H1 (cell line): ENCODE measurements at regions of chr10 and their contacts with region 1.

Region 1: GRCh38 chr10:71494980-71495381 is 98.3 kb downstream of the CDH23 start:
- DNase-seq: no peak
- H3K4me3 ChIP-seq: no peak overlapping the region
- H3K27ac ChIP-seq: no peak overlapping the region
- H3K4me1 ChIP-seq: peaks cover 0 to 4% (median 1%) of the 10 kb centered on the region in 4 experiments; a peak in 1 of 7 replicates
- H3K27me3 ChIP-seq: peaks cover 0 to 33% (median 23%) of the 10 kb centered on the region in 4 experiments; a peak in 6 of 7 replicates
- CTCF ChIP-seq: no peak
- EP300 ChIP-seq: no peak
- POLR2A ChIP-seq: no peak
- RAD21 ChIP-seq: no peak

Region 2: GRCh38 chr10:71522442-71523144 is 27.6 kb after region 1 on chr10:
- CTCF ChIA-PET with region 1: interaction called, 11 read pairs
- POLR2A ChIA-PET with region 1: no interaction called
- DNase-seq: no peak
- H3K4me3 ChIP-seq: no peak overlapping the region
- H3K27ac ChIP-seq: no peak overlapping the region
- H3K4me1 ChIP-seq: peaks cover 0 to 3% (median 0%) of the 10 kb centered on the region in 4 experiments; a peak in 3 of 7 replicates
- H3K27me3 ChIP-seq: no peaks in the 10 kb centered on the region; a peak in 2 of 7 replicates
- CTCF ChIP-seq: peak; percentile 24 to 41 (median 37); a peak in 3 of 4 replicates
- EP300 ChIP-seq: no peak
- POLR2A ChIP-seq: no peak
- RAD21 ChIP-seq: peak; percentile 24 to 39; a peak in 3 of 4 replicates

Region 3: DNA sequence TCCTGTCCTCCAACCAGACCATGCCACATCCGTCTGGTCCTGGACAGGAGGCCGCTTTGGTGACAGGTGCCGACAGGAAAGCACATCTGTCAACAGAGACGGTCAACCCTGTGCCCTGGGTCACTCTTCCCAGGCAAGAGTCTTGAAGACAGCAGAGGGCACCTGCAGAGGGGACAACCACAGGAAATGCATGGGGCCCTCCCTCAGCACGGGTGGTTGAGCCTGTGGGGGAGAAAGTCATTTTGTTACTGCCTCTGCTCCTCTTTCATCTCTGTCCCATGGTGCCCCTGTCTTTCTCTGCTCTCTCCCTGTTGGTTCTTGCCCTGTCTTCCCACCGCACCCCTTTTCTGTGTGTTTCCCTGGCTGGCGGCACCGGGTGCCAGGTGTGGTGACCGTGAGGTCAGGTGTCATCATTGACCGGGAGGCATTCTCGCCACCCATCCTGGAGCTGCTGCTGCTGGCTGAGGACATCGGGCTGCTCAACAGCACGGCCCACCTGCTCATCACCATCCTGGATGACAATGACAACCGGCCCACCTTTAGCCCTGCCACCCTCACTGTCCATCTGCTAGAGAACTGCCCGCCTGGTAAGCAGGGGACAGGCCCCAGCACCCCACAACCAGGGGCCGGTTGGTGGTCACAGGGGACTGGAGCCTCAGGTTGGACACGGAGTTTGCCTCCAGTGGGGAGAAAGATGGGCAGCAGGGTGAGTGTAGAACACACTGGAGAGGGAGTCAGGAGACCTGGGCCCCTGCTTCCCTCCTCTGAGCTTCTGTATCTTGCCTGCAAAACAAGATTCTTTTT is 296.0 kb after region 1 on chr10:
- CTCF ChIA-PET with region 1: no interaction called
- POLR2A ChIA-PET with region 1: no interaction called
- DNase-seq: no peak
- H3K4me3 ChIP-seq: no peak overlapping the region
- H3K27ac ChIP-seq: no peak overlapping the region
- H3K4me1 ChIP-seq: no peaks in the 10 kb centered on the region
- H3K27me3 ChIP-seq: no peaks in the 10 kb centered on the region
- CTCF ChIP-seq: no peak
- EP300 ChIP-seq: no peak
- POLR2A ChIP-seq: no peak
- RAD21 ChIP-seq: no peak